ENCODE measurements at regions of chr11 and their contacts with region 1.

Region 1: GRCh38 chr11:13955971-13956421 is 6.5 kb upstream of the SPON1 start:
- DNase-seq: no peak
- H3K4me3 ChIP-seq: no peak overlapping the region
- CTCF ChIP-seq: peak; percentile 70

Region 2: DNA sequence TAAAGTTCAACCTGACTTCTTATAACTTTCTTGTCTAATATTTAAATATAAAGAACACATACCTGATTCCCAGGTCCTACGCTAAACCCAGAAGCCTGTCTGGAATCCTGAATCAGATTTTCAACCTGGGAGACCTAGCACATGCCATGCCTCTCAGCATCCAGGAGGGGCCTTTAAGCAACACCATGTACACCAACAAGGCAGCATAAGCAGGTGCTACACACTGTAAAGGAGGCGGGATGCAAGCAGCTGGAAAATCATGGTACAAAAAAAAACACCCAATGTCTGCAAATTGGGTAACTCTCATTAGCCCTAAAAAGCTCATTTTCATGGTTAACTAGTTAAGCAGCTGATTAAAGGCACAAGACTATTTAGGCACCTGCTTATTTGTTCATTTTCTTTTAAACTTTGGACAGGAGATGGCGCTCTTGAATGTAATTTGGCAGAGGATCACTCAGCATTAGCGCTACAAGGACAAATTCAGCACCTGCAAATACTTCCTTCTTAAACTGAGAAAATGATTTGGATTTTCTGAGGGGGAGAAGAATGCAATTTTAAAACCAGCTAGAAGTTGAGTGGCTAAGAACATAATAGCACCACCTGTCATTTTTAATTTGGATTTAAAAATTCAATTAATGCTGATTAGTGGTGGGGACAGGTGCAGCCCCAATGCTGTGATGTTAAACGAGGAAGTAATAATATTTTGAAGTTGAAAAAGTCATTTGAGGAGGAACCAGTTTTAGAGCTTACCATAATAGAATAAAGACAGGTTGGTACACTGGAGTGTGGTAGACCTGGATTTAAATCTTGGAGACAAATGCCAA is 183.6 kb before region 1 on chr11:
- CTCF ChIA-PET with region 1: interaction called, 10 read pairs
- POLR2A ChIA-PET with region 1: no interaction called
- DNase-seq: peak; percentile 1
- H3K4me3 ChIP-seq: no peak overlapping the region
- CTCF ChIP-seq: peak; percentile 9

Region 3: DNA sequence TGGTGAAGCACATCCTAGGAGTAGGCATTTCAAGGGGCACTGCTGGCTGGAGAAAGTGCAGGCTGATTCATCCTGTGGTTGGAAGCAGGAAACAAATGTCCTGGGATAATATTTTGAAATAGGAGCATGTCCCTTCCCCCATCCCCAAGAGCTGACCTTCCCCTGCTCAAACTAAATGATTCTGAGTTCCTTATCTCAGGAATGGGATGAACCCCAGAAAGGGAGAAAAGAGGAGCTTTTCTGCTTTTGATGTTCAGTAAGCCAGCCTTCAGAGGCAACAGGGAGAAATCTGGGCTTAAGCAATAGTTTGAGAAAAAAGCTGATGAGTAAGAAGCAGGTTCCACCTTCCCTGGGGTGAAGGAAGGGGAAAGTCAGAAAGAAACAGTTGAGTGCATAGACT is 13.0 kb before region 1 on chr11:
- CTCF ChIA-PET with region 1: interaction called, 18 read pairs
- POLR2A ChIA-PET with region 1: no interaction called
- DNase-seq: no peak
- H3K4me3 ChIP-seq: no peak overlapping the region
- CTCF ChIP-seq: no peak

Region 4: GRCh38 chr11:13970986-13971385 is 15.0 kb after region 1 on chr11:
- CTCF ChIA-PET with region 1: interaction called, 25 read pairs
- POLR2A ChIA-PET with region 1: no interaction called
- DNase-seq: no peak
- H3K4me3 ChIP-seq: no peak overlapping the region
- CTCF ChIP-seq: no peak

Region 5: DNA sequence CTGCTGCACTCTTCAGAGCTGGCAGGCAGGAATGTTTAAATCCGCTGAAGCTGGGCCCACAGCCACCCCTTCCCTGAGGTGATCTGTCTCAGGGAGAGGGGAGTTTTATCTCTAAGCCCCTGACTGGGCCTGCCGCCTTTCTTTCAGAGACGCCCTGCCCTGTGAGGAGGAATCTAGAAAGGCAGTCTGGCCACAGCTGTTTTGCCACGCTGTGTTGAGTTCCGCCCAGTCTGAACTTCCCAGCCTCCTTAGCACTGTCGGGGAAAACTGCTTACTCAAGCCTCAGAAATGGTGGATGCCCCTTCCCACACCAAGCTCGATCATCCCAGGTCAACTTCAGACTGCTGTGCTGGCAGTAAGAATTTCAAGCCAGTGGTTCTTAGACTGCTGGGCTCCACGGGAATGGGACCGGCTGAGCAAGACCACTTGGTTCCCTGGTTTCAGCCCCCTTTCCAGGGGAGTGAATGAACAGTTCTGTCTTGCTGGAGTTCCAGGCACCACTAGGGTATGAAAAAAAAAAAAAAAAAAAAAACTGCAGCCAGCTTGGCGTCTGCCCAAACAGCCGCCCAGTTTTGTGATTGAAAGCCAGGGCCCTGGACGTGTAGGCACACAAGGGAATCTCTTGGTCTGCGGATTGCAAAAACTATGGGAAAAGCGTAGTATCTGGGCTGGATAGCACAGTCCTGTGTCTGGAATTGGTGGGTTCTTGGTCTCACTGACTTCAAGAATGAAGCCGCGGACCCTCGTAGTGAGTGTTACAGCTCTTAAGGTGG is 133.9 kb after region 1 on chr11:
- CTCF ChIA-PET with region 1: no interaction called
- POLR2A ChIA-PET with region 1: no interaction called
- DNase-seq: no peak
- H3K4me3 ChIP-seq: no peak overlapping the region
- CTCF ChIP-seq: no peak

Region 6: GRCh38 chr11:14148653-14149273 is 192.8 kb after region 1 on chr11:
- CTCF ChIA-PET with region 1: interaction called, 63 read pairs
- POLR2A ChIA-PET with region 1: no interaction called
- DNase-seq: no peak
- H3K4me3 ChIP-seq: no peak overlapping the region
- CTCF ChIP-seq: peak; percentile 31

Region 7: GRCh38 chr11:14249121-14249963 is 293.3 kb after region 1 on chr11:
- CTCF ChIA-PET with region 1: interaction called, 84 read pairs
- POLR2A ChIA-PET with region 1: no interaction called
- DNase-seq: no peak
- H3K4me3 ChIP-seq: no peak overlapping the region
- CTCF ChIP-seq: peak; percentile 75

Measured in AG04449 (cell line).